GM12878 (cell line): ENCODE measurements at regions of chr20 and their contacts with region 1.

Region 1: GRCh38 chr20:64279826-64280459 is 24.4 kb downstream of the PCMTD2 start:
- DNase-seq: no peak
- ATAC-seq: peak; percentile 36
- H3K4me3 ChIP-seq: no peak overlapping the region
- H3K27ac ChIP-seq: no peak overlapping the region
- H3K4me1 ChIP-seq: peaks cover 4% of the 10 kb centered on the region; the same call in 1 of the 2 replicates
- H3K27me3 ChIP-seq: no peaks in the 10 kb centered on the region; a peak in 1 of 4 replicates
- CTCF ChIP-seq: no peak
- EP300 ChIP-seq: no peak
- POLR2A ChIP-seq: no peak
- RAD21 ChIP-seq: no peak

Region 2: DNA sequence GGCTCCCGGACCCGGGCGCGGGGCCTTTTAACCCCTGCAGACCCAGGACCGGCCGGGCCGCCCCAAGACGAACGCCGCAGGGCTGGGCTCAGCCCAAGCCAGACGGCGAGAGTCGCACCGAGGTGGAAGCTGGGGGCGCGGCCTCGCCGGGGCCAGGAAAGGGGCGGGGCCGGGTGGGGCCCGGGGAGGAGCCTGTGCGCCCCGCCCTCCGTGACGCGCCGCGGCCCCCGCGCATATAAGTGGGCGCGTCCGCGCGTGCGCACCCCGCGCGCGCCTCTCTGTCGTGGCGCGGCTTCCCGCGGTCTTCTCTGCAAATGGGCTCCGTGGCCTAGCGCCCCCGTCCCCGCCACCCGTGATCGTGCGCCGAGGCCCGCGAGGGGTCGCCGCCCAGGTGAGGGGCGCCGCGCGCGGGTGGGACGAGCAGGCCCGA is 759.4 kb before region 1 on chr20 and contains the start of gene PPDPF:
- CTCF ChIA-PET with region 1: no interaction called
- POLR2A ChIA-PET with region 1: no interaction called
- RAD21 ChIA-PET with region 1: no interaction called
- SMC1A ChIA-PET with region 1: no interaction called
- in situ Hi-C with region 1: no loop called
- intact Hi-C with region 1: no loop called
- DNase-seq: no peak
- ATAC-seq: peak; percentile 90
- H3K4me3 ChIP-seq: peak within 1 kb of the TSS; percentile 86
- H3K27ac ChIP-seq: peak within 1 kb of the TSS; percentile 58
- H3K4me1 ChIP-seq: peaks cover 4% of the 10 kb centered on the region
- H3K27me3 ChIP-seq: no peaks in the 10 kb centered on the region
- CTCF ChIP-seq: no peak
- EP300 ChIP-seq: no peak
- POLR2A ChIP-seq: peak; percentile 88
- RAD21 ChIP-seq: no peak
- polyA plus RNA-seq, gene PPDPF: 0.32 to 2.8 TPM

Region 3: DNA sequence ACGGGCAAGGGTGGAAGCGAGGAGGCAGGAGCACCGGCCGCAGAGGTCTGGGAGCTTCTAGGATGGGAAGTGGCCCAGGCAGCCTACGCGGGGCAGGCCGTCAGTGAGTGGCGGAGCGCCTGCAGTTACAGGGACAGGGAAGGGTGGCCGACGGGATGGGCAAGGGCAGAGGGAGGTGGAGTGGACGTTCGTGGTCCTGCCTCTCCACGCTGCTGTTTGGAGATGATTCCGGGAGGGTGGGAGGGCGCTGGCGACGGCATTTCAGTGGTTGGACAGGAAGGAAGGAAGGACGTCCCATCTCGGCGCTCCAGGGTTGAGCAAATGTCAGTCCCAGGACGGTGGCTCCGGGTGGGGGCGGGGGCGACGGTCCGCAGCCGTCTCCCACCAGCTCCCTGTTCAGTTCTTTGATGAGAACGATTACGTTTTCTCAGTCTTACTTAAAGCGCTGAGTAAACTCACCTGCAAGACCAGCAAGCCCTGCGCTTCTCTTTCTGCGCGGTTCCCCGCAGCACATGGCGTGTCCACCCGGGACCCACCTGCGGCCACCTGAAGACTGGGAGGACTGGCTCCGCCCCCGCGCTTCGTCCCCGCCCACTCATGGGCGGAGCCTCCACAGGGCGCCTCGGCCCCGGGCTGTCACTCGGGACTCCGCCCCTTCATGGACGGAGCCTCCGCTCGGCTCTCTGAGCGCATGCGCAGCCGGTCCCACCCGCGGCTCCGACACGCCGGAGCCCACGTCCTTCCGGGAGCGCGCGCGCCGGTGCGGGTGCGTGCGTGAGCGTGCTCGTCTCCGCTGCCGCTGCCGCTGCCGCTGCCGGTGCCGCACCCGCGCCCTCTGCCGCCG is 385.4 kb before region 1 on chr20 and contains the start of gene DNAJC5:
- CTCF ChIA-PET with region 1: no interaction called
- POLR2A ChIA-PET with region 1: no interaction called
- RAD21 ChIA-PET with region 1: no interaction called
- SMC1A ChIA-PET with region 1: no interaction called
- in situ Hi-C with region 1: no loop called
- intact Hi-C with region 1: no loop called
- DNase-seq: peak; percentile 72
- ATAC-seq: peak; percentile 89
- H3K4me3 ChIP-seq: peak within 1 kb of the TSS; percentile 86
- H3K27ac ChIP-seq: peak within 1 kb of the TSS; percentile 84
- H3K4me1 ChIP-seq: peaks cover 7% of the 10 kb centered on the region
- H3K27me3 ChIP-seq: no peaks in the 10 kb centered on the region
- CTCF ChIP-seq: no peak
- EP300 ChIP-seq: no peak
- POLR2A ChIP-seq: peak; percentile 65
- RAD21 ChIP-seq: no peak
- polyA plus RNA-seq, gene DNAJC5: 0.69 to 1.6 TPM

Region 4: GRCh38 chr20:64072498-64073063 is 207.4 kb before region 1 on chr20:
- CTCF ChIA-PET with region 1: no interaction called
- POLR2A ChIA-PET with region 1: no interaction called
- RAD21 ChIA-PET with region 1: no interaction called
- SMC1A ChIA-PET with region 1: no interaction called
- in situ Hi-C with region 1: no loop called
- intact Hi-C with region 1: no loop called
- DNase-seq: no peak
- ATAC-seq: no peak
- H3K4me3 ChIP-seq: no peak overlapping the region
- H3K27ac ChIP-seq: no peak overlapping the region
- H3K4me1 ChIP-seq: peaks cover 8% of the 10 kb centered on the region; the same call in 1 of the 2 replicates
- H3K27me3 ChIP-seq: no peaks in the 10 kb centered on the region
- CTCF ChIP-seq: no peak
- EP300 ChIP-seq: no peak
- POLR2A ChIP-seq: no peak
- RAD21 ChIP-seq: no peak

Region 5: GRCh38 chr20:64223526-64224067 is 56.3 kb before region 1 on chr20:
- CTCF ChIA-PET with region 1: interaction called, 10 read pairs
- POLR2A ChIA-PET with region 1: no interaction called
- RAD21 ChIA-PET with region 1: no interaction called
- SMC1A ChIA-PET with region 1: interaction called, 3 read pairs
- in situ Hi-C with region 1: no loop called
- intact Hi-C with region 1: no loop called
- DNase-seq: no peak
- ATAC-seq: peak; percentile 79
- H3K4me3 ChIP-seq: no peak overlapping the region
- H3K27ac ChIP-seq: no peak overlapping the region
- H3K4me1 ChIP-seq: no peaks in the 10 kb centered on the region
- H3K27me3 ChIP-seq: peaks cover 0 to 9% of the 10 kb centered on the region in 2 experiments; a peak in 2 of 4 replicates
- CTCF ChIP-seq: peak in 2 of 3 experiments; percentile 50 to 58; a peak in 3 of 6 replicates
- EP300 ChIP-seq: no peak
- POLR2A ChIP-seq: no peak
- RAD21 ChIP-seq: no peak